ENCODE measurements at regions of chr12 and their contacts with region 1.

Region 1: GRCh38 chr12:8681041-8681902 is 16.5 kb upstream of the RIMKLB start:
- DNase-seq: peak; percentile 91
- H3K4me3 ChIP-seq: peak overlapping the region in 2 of 3 experiments; percentile 3 to 53
- H3K27ac ChIP-seq: peak overlapping the region; percentile 63
- H3K4me1 ChIP-seq: peaks cover 27% of the 10 kb centered on the region
- H3K27me3 ChIP-seq: no peaks in the 10 kb centered on the region
- CTCF ChIP-seq: no peak
- POLR2A ChIP-seq: no peak

Region 2: DNA sequence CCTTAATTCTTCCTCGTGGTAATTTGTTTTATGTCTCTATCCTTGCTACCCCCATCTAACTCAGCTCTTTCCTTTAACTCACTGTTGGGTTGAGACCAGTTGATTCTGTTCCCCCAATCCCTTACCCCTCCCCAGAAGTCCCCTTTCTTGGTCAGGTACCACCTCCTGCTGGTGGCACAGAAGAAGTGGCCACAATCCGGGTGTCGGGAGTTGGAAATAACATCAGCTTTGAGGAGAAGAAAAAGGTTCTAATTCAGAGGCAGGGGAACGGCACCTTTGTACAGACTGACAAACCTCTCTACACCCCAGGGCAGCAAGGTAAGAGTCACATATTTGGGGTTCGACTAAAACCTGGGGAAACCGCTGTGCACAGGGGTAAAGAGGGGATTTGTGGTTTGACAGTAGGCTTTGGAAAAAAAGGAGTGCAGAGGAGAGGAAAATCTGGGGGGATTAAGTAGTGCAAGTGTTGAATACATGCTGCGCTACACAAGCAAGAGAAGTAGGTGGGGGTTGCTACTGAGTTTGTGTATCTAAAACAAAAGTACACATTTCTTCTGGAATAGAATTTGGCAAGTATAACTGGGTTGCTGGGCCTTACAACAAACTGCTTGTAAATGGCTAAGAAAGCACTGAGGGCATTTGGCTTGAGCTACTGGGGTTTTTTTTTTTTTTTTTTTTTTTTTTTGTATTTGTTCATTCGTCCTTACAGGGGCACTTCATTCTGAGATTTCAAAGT is 142.5 kb after region 1 on chr12:
- CTCF ChIA-PET with region 1: interaction called, 74 read pairs
- POLR2A ChIA-PET with region 1: no interaction called
- dilution Hi-C with region 1: no loop called
- intact Hi-C with region 1: loop called (anchors 1 kb)
- DNase-seq: peak; percentile 53
- H3K4me3 ChIP-seq: no peak overlapping the region
- H3K27ac ChIP-seq: no peak overlapping the region
- H3K4me1 ChIP-seq: no peaks in the 10 kb centered on the region
- H3K27me3 ChIP-seq: peaks cover 1 to 3% of the 10 kb centered on the region in 2 experiments
- CTCF ChIP-seq: peak; percentile 62 to 65
- POLR2A ChIP-seq: no peak

Region 3: DNA sequence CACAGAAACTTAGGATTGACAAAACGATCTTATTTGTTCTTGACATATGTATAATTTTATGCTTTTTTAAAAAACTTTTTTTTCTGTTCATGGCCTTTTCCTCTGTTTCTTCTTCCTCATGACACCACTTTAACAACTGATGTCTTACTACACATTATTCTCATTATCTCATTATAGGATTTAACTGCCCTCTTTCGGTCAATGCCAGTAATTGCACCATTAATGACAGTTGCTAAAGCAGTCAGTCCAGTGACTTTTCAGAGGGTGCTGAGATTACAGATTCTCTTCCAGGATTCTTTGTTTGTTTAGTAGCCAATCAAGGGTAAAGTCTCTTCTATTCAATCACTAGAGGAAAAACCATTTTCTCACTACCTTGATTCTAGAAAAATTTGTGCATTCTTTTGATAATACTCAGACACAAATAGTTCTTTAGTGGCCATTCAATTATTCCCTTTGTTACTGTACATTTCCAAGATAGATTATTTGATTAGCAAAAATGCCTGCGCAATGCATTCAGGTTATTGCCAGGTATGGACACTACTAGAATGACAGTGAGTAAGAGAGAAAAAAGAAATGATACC is 358.2 kb after region 1 on chr12:
- CTCF ChIA-PET with region 1: interaction called, 9 read pairs
- POLR2A ChIA-PET with region 1: no interaction called
- dilution Hi-C with region 1: no loop called
- intact Hi-C with region 1: loop called (anchors 1 kb)
- DNase-seq: peak; percentile 63
- H3K4me3 ChIP-seq: no peak overlapping the region
- H3K27ac ChIP-seq: no peak overlapping the region
- H3K4me1 ChIP-seq: no peaks in the 10 kb centered on the region
- H3K27me3 ChIP-seq: peaks cover 7 to 8% of the 10 kb centered on the region in 2 experiments
- CTCF ChIP-seq: peak; percentile 47 to 54
- POLR2A ChIP-seq: no peak

Measured in endothelial cell of umbilical vein (primary cell).